HCT116 (cell line): ENCODE measurements at regions of chr3 and their contacts with region 1.

Region 1: DNA sequence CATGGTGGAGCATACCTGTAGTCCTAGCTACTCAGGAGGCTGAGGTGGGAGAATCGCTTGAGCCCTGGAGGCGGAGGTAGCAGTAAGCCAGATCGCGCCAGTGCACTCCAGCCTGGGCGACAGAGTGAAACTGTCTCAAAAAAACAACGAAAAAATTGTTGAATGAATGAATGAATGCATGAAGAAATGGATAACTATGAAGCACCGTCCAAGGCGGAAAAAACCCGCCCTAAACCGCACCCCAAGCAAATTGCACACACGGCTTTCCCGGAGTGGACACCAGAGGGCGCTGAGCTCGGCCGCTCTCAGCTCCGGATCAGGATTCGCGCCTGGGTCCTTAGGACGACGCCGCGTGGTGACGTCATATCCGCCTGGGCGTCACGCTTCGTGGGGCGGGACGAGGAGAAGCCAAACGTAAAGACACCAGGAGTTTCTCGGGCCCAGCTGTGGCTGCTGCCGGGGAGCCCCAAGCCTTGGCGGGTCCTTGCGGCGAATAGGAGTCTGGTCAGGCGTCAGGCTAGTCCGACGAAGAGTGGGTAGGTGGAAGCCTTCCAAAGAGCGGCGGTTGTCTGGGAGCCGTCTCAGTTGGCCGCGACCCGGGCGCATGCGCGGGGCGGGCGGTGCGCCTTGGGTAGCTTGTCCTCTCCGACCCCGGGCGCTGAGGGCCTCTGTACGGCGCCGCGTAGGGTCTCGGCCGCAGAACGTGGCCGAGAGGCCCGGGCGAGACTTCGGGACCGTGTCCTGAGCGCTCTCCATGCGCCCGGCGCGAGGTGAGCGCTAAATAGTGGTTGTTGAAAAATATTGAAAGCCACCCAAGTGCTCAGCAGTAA is at the starts of genes HTD2 and RPP14:
- DNase-seq: peak; percentile 97
- ATAC-seq: peak; percentile 87
- H3K4me3 ChIP-seq: peak within 1 kb of the TSS; percentile 75 to 99
- H3K27ac ChIP-seq: peak within 1 kb of the TSS; percentile 89
- H3K4me1 ChIP-seq: peaks cover 0 to 17% of the 10 kb centered on the region in 2 experiments; a peak in 3 of 4 replicates
- H3K27me3 ChIP-seq: no peaks in the 10 kb centered on the region
- CTCF ChIP-seq: peak; percentile 84 to 98 (median 88)
- POLR2A ChIP-seq: peak; percentile 26
- RAD21 ChIP-seq: peak; percentile 49
- total RNA-seq, gene HTD2: 13.5 TPM
- total RNA-seq, gene RPP14: 22.4 TPM

Region 2: DNA sequence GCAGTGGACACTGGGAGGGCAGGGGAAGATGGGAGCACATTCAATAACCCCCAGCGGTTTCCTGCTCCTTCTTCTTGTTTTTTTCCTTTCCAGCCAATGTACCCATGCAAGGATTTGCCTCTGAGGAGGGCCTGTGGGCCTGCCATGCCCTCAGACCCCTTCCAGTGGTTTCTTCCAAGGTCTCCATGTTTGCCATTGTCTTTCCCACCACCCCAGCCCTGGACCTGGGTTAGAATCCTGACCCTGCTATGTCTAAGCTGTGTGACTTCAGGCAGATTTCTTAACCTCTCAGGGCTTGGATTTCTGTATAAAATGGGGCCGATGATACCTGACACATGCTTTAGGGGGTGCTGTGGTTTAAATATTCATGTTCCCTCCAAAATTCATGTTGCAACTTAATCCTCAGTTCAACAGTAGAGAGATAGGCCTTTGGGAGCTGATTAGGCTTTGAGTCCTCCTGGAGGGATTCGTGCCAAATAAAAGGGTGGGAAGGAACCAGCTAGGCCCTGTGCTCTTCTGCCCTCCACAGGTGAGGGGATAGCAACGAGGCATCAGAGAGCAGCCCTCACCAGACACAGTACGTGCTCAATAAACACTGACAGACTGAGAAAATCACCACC is 344.2 kb before region 1 on chr3:
- CTCF ChIA-PET with region 1: interaction called, 3 read pairs
- POLR2A ChIA-PET with region 1: no interaction called
- RAD21 ChIA-PET with region 1: no interaction called
- intact Hi-C with region 1: loop called (anchors 10 kb)
- DNase-seq: peak; percentile 56
- ATAC-seq: peak; percentile 77
- H3K4me3 ChIP-seq: no peak overlapping the region
- H3K27ac ChIP-seq: no peak overlapping the region
- H3K4me1 ChIP-seq: peaks cover 8 to 16% of the 10 kb centered on the region in 2 experiments; a peak in 3 of 4 replicates
- H3K27me3 ChIP-seq: no peaks in the 10 kb centered on the region
- CTCF ChIP-seq: peak; percentile 40 to 61 (median 43); a peak in 5 of 6 replicates
- POLR2A ChIP-seq: no peak
- RAD21 ChIP-seq: peak; percentile 78

Region 3: GRCh38 chr3:58188173-58188564 is 117.9 kb before region 1 on chr3:
- CTCF ChIA-PET with region 1: interaction called, 116 read pairs
- POLR2A ChIA-PET with region 1: interaction called, 18 read pairs
- RAD21 ChIA-PET with region 1: interaction called, 5 to 7 read pairs
- intact Hi-C with region 1: no loop called
- DNase-seq: no peak
- ATAC-seq: peak; percentile 57
- H3K4me3 ChIP-seq: no peak overlapping the region
- H3K27ac ChIP-seq: no peak overlapping the region
- H3K4me1 ChIP-seq: peaks cover 2 to 11% of the 10 kb centered on the region in 2 experiments; a peak in 3 of 4 replicates
- H3K27me3 ChIP-seq: no peaks in the 10 kb centered on the region
- CTCF ChIP-seq: no peak
- POLR2A ChIP-seq: no peak
- RAD21 ChIP-seq: no peak

Region 4: GRCh38 chr3:58271901-58272501 is 34.1 kb before region 1 on chr3:
- CTCF ChIA-PET with region 1: interaction called, 14 read pairs
- POLR2A ChIA-PET with region 1: no interaction called
- RAD21 ChIA-PET with region 1: no interaction called
- intact Hi-C with region 1: no loop called
- DNase-seq: peak; percentile 73
- ATAC-seq: peak; percentile 95
- H3K4me3 ChIP-seq: peak overlapping the region in 1 of 2 experiments; percentile 34; a peak in 2 of 4 replicates
- H3K27ac ChIP-seq: peak overlapping the region; percentile 27; the same call in 1 of the 2 replicates
- H3K4me1 ChIP-seq: peaks cover 11 to 25% of the 10 kb centered on the region in 2 experiments
- H3K27me3 ChIP-seq: no peaks in the 10 kb centered on the region
- CTCF ChIP-seq: no peak
- POLR2A ChIP-seq: no peak
- RAD21 ChIP-seq: no peak

Region 5: GRCh38 chr3:58404396-58404795 is 98.3 kb after region 1 on chr3:
- CTCF ChIA-PET with region 1: no interaction called
- POLR2A ChIA-PET with region 1: no interaction called
- RAD21 ChIA-PET with region 1: no interaction called
- intact Hi-C with region 1: no loop called
- DNase-seq: no peak
- ATAC-seq: no peak
- H3K4me3 ChIP-seq: no peak overlapping the region
- H3K27ac ChIP-seq: no peak overlapping the region
- H3K4me1 ChIP-seq: no peaks in the 10 kb centered on the region
- H3K27me3 ChIP-seq: no peaks in the 10 kb centered on the region
- CTCF ChIP-seq: no peak
- POLR2A ChIP-seq: no peak
- RAD21 ChIP-seq: no peak

Region 6: DNA sequence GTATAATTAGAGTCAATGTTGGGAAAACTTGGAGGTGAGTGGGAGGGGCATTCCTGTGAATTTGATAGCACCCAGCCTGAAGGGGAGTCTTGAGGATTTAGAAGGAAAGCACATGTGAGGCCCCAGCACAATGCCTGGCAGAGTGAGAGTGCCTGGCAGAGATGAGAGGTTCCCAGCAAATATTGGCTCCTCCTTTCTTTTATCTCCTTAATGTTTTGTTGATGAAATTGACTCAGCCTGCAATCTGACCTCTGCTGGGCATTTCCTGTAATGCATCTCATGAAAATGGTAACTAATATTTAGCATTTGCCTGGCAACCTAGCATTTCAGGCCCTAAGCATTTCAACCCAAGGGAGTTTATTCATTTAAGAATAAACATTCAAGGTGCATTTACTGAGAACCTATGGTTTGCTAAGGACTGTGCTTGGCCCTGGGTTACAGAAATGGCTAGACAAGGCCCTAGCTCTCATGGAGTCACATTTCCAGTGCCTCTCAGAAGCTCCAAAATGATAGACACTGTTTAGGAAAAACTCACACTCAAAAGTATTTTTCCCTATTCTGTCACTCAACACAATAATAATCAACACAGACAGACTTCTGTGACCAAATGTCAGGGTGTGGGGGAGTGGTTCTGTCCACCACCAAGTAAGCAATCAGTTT is 108.6 kb after region 1 on chr3:
- CTCF ChIA-PET with region 1: interaction called, 5 read pairs
- POLR2A ChIA-PET with region 1: no interaction called
- RAD21 ChIA-PET with region 1: no interaction called
- intact Hi-C with region 1: loop called (anchors 5 kb)
- DNase-seq: peak; percentile 44
- ATAC-seq: peak; percentile 86
- H3K4me3 ChIP-seq: no peak overlapping the region
- H3K27ac ChIP-seq: no peak overlapping the region
- H3K4me1 ChIP-seq: peaks cover 2 to 3% of the 10 kb centered on the region in 2 experiments; a peak in 3 of 4 replicates
- H3K27me3 ChIP-seq: no peaks in the 10 kb centered on the region
- CTCF ChIP-seq: peak; percentile 66 to 87 (median 80)
- POLR2A ChIP-seq: no peak
- RAD21 ChIP-seq: peak; percentile 74

Region 7: GRCh38 chr3:58532794-58533220 is 226.7 kb after region 1 on chr3:
- CTCF ChIA-PET with region 1: interaction called, 10 read pairs
- POLR2A ChIA-PET with region 1: no interaction called
- RAD21 ChIA-PET with region 1: no interaction called
- intact Hi-C with region 1: loop called (anchors 1 kb)
- DNase-seq: peak; percentile 69
- ATAC-seq: peak; percentile 91
- H3K4me3 ChIP-seq: 0 out of 4 replicates have a peak overlapping the region, but pooled peaks of 1 of the 2 experiments have one; percentile 12
- H3K27ac ChIP-seq: no peak overlapping the region
- H3K4me1 ChIP-seq: peaks cover 2 to 14% of the 10 kb centered on the region in 2 experiments; a peak in 2 of 4 replicates
- H3K27me3 ChIP-seq: no peaks in the 10 kb centered on the region
- CTCF ChIP-seq: peak; percentile 91 to 95 (median 94)
- POLR2A ChIP-seq: no peak
- RAD21 ChIP-seq: peak; percentile 95